ENCODE measurements at regions of chr14 and their contacts with region 1.

Region 1: DNA sequence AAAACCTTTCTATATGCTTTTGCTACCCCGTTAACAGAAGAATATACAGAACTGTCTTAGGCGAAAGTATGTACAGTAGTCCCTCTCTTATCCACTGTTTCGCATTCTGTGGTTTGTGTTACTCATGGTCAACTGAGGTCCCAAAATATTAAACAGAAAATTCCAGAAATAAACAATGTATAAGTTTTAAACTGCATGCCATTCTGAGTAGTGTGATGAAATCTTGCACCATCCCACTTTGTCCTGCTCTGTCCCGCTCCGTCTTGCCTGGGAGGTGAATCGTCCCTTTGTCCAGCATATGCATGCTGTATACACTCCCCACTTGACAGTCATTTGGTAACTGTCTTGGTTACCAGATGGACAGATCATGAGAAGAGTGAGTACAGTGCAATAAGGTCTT is 70.1 kb upstream of the STRN3 start:
- DNase-seq: no peak
- ATAC-seq: no peak
- H3K4me3 ChIP-seq: no peak overlapping the region
- H3K27ac ChIP-seq: no peak overlapping the region
- H3K4me1 ChIP-seq: peaks cover 23% of the 10 kb centered on the region
- H3K27me3 ChIP-seq: no peaks in the 10 kb centered on the region
- CTCF ChIP-seq: no peak
- EP300 ChIP-seq: no peak
- POLR2A ChIP-seq: no peak
- RAD21 ChIP-seq: no peak

Region 2: DNA sequence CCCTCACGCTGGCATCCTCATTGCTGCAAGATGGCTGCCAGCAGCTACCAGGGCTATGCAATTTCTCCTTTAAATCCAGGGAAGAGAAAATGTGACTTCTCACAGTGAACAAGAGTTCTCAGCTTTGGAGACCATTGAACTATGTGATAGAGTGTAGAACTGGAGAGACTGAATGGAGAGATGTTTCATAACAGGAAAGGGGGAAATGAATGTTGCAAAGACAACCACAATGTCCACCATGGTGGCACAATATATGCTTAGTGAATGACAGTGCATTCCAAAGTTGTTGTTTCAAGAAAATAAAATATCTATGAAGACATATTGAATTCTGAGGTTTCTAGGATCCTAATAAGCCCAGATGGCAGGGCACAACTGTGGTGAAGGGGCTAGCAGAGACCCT is 235.1 kb before region 1 on chr14:
- CTCF ChIA-PET with region 1: no interaction called
- POLR2A ChIA-PET with region 1: no interaction called
- in situ Hi-C with region 1: no loop called
- intact Hi-C with region 1: no loop called
- DNase-seq: no peak
- ATAC-seq: no peak
- H3K4me3 ChIP-seq: no peak overlapping the region
- H3K27ac ChIP-seq: no peak overlapping the region
- H3K4me1 ChIP-seq: peaks cover 7% of the 10 kb centered on the region; the same call in 1 of the 2 replicates
- H3K27me3 ChIP-seq: peaks cover 0 to 28% of the 10 kb centered on the region in 2 experiments; a peak in 3 of 5 replicates
- CTCF ChIP-seq: no peak
- EP300 ChIP-seq: no peak
- POLR2A ChIP-seq: no peak
- RAD21 ChIP-seq: no peak

Region 3: DNA sequence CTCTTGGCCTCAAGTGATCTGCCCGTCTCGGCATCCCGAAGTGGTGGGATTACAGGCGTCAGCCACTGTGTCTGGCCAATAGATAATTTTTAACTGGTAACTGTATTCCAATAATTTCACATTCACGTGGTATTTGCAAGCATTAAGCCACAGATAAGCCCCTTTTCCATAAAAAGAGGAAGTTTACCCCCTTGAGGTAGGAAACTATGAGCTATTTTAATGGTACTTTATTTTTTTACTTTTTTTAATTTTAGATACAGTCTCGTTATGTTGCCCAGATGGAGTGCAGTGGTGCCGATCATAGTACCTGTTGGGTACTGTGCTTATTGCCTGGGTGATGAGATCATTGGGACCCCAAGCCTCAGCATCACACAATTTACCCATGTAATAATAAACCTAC is 113.7 kb before region 1 on chr14:
- CTCF ChIA-PET with region 1: no interaction called
- POLR2A ChIA-PET with region 1: no interaction called
- in situ Hi-C with region 1: no loop called
- intact Hi-C with region 1: loop called (anchors 5 kb)
- DNase-seq: no peak
- ATAC-seq: no peak
- H3K4me3 ChIP-seq: no peak overlapping the region
- H3K27ac ChIP-seq: no peak overlapping the region
- H3K4me1 ChIP-seq: peaks cover 17% of the 10 kb centered on the region
- H3K27me3 ChIP-seq: no peaks in the 10 kb centered on the region
- CTCF ChIP-seq: no peak
- EP300 ChIP-seq: no peak
- POLR2A ChIP-seq: no peak
- RAD21 ChIP-seq: no peak

Region 4: GRCh38 chr14:31051511-31051910 is 44.7 kb before region 1 on chr14:
- CTCF ChIA-PET with region 1: no interaction called
- POLR2A ChIA-PET with region 1: no interaction called
- in situ Hi-C with region 1: no loop called
- intact Hi-C with region 1: no loop called
- DNase-seq: no peak
- ATAC-seq: no peak
- H3K4me3 ChIP-seq: no peak overlapping the region
- H3K27ac ChIP-seq: no peak overlapping the region
- H3K4me1 ChIP-seq: peaks cover 28% of the 10 kb centered on the region
- H3K27me3 ChIP-seq: no peaks in the 10 kb centered on the region
- CTCF ChIP-seq: no peak
- EP300 ChIP-seq: no peak
- POLR2A ChIP-seq: no peak
- RAD21 ChIP-seq: no peak